Heart right ventricle (tissue), 16 donors: ENCODE measurements at regions of chrX and their contacts with region 1.

Region 1: DNA sequence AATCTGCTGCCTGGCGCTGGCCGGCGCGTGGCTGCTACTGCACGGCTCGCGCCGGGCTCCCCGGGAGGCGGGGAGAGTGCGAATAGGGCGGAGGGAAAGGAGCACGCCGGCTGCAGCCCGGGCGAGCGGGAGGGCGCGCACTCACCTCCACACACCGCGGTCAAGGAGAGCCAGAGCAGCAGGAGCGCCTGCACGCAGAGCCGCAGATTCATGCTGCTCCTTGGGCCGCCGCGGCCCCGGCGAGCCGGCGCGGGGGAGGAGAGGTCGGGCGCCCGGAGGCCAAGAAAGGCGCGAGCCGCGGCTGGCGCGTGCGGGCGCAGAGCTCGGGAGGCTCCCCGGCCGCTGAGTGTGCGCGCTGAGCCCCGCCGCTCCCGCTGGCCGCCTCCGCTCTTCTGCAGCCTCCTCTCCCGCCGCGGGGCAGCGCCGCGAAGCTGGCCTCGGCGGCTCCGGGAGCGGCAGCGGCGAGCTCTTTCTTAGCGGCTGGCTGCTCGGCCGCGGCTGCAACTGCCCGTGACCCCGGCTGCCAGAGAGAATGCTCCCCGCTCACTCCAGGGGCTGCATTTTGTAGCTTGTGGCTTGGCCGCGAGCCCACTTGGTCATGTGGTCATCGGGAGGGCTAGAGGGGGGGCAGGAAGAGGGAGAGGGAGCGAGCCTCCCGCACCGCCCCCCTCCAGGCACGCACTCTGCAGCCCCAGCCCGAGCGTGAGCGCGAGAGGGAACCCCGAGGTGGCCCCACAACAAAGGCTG is at the start of gene APLN:
- DNase-seq: peak; percentile 58 to 69
- ATAC-seq: peak; percentile 52 to 73 (median 62)
- H3K4me3 ChIP-seq: peak within 1 kb of the TSS; percentile 19 to 60 (median 54)
- H3K27ac ChIP-seq: peak within 1 kb of the TSS in 9 of 10 donors; percentile 25 to 77 (median 67)
- H3K4me1 ChIP-seq: peaks cover 0 to 30% (median 8%) of the 10 kb centered on the region in 9 donors
- H3K27me3 ChIP-seq: peaks cover 0 to 38% (median 0%) of the 10 kb centered on the region in 7 donors
- CTCF ChIP-seq: peak in 1 of 9 donors; percentile 17
- total RNA-seq, gene APLN: 8.8 to 44.7 (median 14.1) TPM

Region 2: GRCh38 chrX:129606918-129607317 is 47.7 kb before region 1 on chrX:
- intact Hi-C with region 1: no loop called
- DNase-seq: peak in 1 of 2 donors; percentile 57
- ATAC-seq: peak in 7 of 8 donors; percentile 27 to 76 (median 56)
- H3K4me3 ChIP-seq: no peak overlapping the region
- H3K27ac ChIP-seq: no peak overlapping the region
- H3K4me1 ChIP-seq: peaks cover 0 to 18% (median 7%) of the 10 kb centered on the region in 9 donors
- H3K27me3 ChIP-seq: peaks cover 0 to 9% (median 0%) of the 10 kb centered on the region in 7 donors
- CTCF ChIP-seq: peak; percentile 41 to 75 (median 71)

Region 3: DNA sequence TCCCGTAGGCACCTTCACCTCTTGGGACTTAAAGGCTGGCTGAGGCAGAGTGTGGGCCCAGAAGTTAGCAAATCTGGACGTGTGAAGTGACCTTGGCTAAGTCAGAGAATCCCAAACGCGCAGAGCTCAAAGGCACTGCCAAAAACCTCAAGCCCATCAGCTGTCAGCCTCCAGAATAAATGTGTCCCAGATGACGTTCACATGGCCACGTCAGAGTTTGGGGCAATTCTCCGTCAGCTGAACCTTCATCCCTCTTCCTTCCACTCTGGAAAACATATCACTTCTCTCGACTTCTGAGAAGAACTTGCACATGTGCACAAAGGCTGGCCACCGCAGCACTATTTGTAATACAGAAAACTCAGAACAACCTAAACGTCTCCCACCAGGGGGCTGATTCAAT is 35.8 kb after region 1 on chrX:
- intact Hi-C with region 1: no loop called
- DNase-seq: peak; percentile 21 to 40
- ATAC-seq: peak; percentile 55 to 84 (median 71)
- H3K4me3 ChIP-seq: no peak overlapping the region
- H3K27ac ChIP-seq: peak overlapping the region in 3 of 10 donors; percentile 9 to 41 (median 37)
- H3K4me1 ChIP-seq: peaks cover 0 to 24% (median 0%) of the 10 kb centered on the region in 9 donors
- H3K27me3 ChIP-seq: no peaks in the 10 kb centered on the region
- CTCF ChIP-seq: no peak

Region 4: GRCh38 chrX:129726307-129727111 is 71.9 kb after region 1 on chrX:
- intact Hi-C with region 1: loop called in 1 of 10 experiments (anchors 5 kb)
- DNase-seq: peak; percentile 59 to 64
- ATAC-seq: peak in 7 of 8 donors; percentile 77 to 93 (median 88)
- H3K4me3 ChIP-seq: no peak overlapping the region
- H3K27ac ChIP-seq: no peak overlapping the region
- H3K4me1 ChIP-seq: no peaks in the 10 kb centered on the region
- H3K27me3 ChIP-seq: peaks cover 0 to 12% (median 0%) of the 10 kb centered on the region in 7 donors
- CTCF ChIP-seq: peak; percentile 44 to 78 (median 71)